Activated T-helper 1 cell treated with anti-CD3 and anti-CD28 coated beads, Interleukin-12 subunit alpha, Interleukin-12 subunit beta, Interleukin-2, Interleukin-4 antibody, amounts not matched to agents 30 ng/mL and 10 ng/mL and 1 ng/mL, durations not matched to agents 14 hours and 24 hours and 36 hours (primary cell): ENCODE measurements at regions of chr19 and their contacts with region 1.

Region 1: DNA sequence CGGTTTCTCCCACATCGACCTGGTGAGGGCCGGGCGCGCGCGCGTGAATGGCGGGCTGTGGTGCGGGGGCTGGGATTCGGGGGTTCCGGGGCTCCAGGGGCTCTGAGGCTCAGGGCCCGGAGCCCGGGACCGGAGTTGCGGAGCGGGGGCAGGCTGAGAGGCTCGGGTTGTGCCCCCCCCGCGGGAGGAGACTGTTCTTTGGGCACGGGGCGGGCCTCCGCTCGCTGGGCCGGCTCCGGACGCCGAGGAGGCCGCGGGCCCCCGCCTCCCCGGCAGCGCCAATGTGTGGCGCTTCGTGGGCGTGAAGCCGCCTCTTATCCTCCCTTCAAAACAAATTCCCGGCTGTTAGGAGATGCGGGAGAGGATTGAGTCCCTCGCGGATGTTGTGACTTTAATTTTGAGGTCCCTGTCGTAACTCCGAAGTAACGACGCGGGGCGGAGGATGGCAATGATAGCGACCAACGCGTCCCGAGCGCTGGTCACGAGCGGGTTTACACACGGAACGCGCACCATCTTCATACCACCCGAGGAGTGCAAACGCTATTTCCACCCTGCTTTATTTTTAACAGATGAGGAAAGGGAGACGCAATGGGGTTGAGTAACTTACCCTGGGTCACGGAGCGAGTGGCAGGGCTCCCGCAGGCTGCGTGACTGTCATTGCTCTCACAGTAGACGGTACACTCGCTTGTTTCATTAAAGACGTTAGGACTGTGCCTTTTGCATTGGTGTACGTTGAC is 536 bp downstream of the UBA2 start:
- DNase-seq: peak; percentile 31
- H3K4me3 Mint-ChIP-seq: peak overlapping the region; percentile 98
- H3K27ac Mint-ChIP-seq: peak overlapping the region; percentile 95
- H3K4me1 Mint-ChIP-seq: peaks cover 45% of the 10 kb centered on the region
- H3K27me3 Mint-ChIP-seq: no peaks in the 10 kb centered on the region

Region 2: GRCh38 chr19:34232566-34233481 is 195.9 kb before region 1 on chr19:
- intact Hi-C with region 1: loop called (anchors 10 kb)
- DNase-seq: peak; percentile 5
- H3K4me3 Mint-ChIP-seq: peak overlapping the region; percentile 62
- H3K27ac Mint-ChIP-seq: peak overlapping the region; percentile 76
- H3K4me1 Mint-ChIP-seq: peaks cover 31% of the 10 kb centered on the region
- H3K27me3 Mint-ChIP-seq: no peaks in the 10 kb centered on the region

Region 3: DNA sequence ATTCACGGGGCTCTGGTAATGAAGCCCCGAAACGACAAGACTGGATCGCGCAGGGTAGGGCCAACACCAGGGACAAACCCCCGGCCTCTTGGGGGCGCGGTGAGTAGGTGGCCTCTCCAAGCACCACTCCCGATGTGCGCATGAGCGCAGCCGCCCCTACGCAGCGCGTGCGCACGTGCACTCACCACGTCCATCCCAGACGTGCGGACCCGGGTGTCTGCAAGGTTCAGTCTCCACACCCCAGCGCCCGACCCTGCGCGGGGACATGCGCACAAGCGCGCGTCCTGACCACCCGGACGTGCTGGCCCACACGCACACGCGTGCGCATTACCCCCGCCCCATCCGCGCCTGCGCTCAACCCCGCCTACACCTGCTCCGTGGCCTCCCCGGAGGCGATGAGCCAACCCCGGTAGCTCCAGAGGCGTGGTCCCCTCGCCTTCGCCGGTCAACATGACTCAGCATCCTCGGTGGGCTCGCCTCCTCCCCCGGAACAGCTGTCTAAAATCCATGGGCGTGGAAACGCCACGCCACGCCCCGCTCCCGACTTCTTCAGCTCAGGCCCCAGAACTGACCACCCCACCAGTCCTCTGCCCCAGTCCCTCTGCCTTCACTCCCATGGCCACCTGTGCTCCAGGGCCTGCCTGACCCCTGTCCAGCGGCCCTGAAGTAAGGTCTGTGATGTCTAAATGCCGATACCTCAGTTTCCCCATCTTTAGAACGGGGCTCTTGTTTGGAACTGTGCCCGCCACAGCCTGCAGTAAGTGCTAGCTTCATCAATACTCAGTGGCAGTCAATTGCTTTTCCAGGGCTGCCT is 69.4 kb before region 1 on chr19:
- intact Hi-C with region 1: loop called (anchors 2 kb)
- DNase-seq: peak; percentile 96
- H3K4me3 Mint-ChIP-seq: peak overlapping the region; percentile 84
- H3K27ac Mint-ChIP-seq: peak overlapping the region; percentile 97
- H3K4me1 Mint-ChIP-seq: peaks cover 45% of the 10 kb centered on the region
- H3K27me3 Mint-ChIP-seq: no peaks in the 10 kb centered on the region

Region 4: DNA sequence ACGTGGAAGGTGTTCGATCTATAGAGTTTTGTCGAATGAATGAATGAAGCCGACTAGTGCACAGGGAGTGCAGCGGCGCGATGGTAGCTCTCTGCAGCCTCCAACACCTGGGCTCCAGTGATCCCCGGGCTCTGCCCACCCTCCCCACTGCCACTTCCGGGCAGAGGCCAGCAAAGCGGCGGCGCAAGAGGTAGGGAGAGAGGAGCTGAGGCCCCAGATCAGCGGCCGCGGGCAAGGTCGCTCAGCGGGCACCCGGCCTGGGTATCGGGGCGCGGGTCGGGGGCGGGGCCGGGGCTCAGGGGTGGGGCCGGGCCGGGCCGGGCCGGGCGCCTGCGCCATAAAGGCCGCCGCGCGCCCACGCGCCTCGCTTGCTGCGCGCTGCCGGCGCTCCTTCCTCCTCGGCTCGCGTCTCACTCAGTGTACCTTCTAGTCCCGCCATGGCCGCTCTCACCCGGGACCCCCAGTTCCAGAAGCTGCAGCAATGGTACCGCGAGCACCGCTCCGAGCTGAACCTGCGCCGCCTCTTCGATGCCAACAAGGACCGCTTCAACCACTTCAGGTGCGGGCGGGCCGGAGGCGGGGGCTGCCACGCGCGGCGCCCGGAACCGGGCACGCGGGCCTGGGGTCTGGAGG is 63.8 kb before region 1 on chr19 and contains the start of gene GPI:
- intact Hi-C with region 1: loop called (anchors 2 kb)
- DNase-seq: peak; percentile 55
- H3K4me3 Mint-ChIP-seq: peak within 1 kb of the TSS; percentile 100
- H3K27ac Mint-ChIP-seq: peak within 1 kb of the TSS; percentile 95
- H3K4me1 Mint-ChIP-seq: peaks cover 51% of the 10 kb centered on the region
- H3K27me3 Mint-ChIP-seq: no peaks in the 10 kb centered on the region
- total RNA-seq, gene GPI: 502 and 509 TPM in 2 replicates

Region 5: DNA sequence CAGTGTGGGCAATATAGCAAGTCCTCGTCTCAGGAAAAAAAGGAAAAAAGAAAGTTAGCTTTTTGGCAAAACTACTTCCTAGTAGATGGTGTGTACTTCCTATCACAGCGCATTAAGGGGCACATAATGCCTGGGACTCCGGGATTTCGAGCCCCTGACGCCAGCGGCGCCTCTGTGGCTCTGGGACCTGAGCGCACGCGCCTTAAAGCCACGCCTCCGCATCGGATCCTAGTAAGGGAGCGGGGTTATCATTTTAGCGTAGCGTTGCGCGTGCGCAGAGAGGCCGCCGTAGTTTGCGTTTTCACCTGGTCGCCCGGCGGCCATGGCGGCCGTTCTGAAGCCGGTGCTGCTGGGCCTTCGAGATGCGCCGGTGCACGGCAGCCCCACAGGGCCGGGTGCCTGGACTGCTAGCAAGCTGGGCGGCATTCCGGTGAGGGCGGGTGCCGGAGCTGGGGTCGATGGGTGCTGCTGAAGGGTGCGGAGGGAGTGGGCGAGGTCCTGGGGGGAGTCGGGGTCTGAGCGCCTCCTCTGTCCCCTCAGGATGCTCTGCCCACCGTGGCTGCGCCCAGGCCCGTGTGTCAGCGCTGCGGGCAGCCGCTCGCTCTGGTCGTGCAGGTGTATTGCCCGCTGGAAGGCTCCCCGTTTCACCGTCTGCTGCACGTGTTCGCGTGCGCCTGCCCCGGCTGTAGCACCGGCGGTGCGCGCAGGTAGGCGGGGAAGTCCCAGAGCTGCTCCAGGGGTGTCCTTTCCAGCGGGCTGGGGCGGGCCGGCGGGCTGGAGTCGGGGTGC is 24.4 kb before region 1 on chr19 and contains the start of gene PDCD2L:
- intact Hi-C with region 1: loop called (anchors 1 kb)
- DNase-seq: peak; percentile 89
- H3K4me3 Mint-ChIP-seq: peak within 1 kb of the TSS; percentile 94
- H3K27ac Mint-ChIP-seq: peak within 1 kb of the TSS; percentile 86
- H3K4me1 Mint-ChIP-seq: peaks cover 13% of the 10 kb centered on the region
- H3K27me3 Mint-ChIP-seq: no peaks in the 10 kb centered on the region
- total RNA-seq, gene PDCD2L: 51.3 and 52.3 TPM in 2 replicates